A549 (cell line): ENCODE measurements at regions of chr1 and their contacts with region 1.

Region 1: DNA sequence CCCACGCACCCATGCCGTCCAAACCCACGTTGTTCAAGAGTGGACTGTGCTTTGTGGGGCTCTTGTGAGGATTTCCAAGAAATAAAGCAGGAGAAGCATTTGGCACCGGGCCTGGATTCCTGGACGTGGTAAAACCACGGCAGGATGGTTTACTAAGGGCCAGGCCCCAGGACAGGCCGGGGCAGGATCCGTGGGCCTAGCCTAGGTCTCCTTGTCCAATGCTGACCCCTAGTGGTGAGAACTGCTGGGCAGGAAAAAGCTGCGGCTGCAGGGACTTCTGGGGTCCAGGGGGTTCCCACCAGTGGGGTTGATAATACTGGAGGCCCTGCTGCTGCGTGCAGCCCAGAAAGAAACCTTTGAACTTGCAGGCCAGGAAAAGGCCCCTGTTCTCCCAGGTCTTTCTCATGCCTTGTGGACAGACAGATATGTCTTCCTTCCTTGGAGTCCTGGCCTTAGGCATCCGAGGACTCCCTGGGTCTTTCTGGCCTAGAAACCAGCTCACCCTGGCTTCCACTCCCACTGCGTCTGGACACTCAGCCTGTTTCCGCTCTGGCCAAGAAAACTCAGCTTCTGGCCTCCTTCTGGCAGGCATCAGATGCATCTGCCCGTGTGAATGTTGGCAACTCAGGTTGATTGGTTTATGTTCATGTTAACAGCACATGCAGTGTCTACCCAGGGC is 106.9 kb upstream of the TMEM51 start:
- DNase-seq: peak; percentile 60 to 66
- ATAC-seq: peak; percentile 83 to 94
- H3K4me3 ChIP-seq: no peak overlapping the region
- H3K27ac ChIP-seq: peak overlapping the region in 1 of 2 experiments; percentile 72; a peak in 2 of 6 replicates
- H3K4me1 ChIP-seq: no peaks in the 10 kb centered on the region
- CTCF ChIP-seq: peak; percentile 77
- EP300 ChIP-seq: no peak
- POLR2A ChIP-seq: no peak
- RAD21 ChIP-seq: peak; percentile 84 to 86

Region 2: DNA sequence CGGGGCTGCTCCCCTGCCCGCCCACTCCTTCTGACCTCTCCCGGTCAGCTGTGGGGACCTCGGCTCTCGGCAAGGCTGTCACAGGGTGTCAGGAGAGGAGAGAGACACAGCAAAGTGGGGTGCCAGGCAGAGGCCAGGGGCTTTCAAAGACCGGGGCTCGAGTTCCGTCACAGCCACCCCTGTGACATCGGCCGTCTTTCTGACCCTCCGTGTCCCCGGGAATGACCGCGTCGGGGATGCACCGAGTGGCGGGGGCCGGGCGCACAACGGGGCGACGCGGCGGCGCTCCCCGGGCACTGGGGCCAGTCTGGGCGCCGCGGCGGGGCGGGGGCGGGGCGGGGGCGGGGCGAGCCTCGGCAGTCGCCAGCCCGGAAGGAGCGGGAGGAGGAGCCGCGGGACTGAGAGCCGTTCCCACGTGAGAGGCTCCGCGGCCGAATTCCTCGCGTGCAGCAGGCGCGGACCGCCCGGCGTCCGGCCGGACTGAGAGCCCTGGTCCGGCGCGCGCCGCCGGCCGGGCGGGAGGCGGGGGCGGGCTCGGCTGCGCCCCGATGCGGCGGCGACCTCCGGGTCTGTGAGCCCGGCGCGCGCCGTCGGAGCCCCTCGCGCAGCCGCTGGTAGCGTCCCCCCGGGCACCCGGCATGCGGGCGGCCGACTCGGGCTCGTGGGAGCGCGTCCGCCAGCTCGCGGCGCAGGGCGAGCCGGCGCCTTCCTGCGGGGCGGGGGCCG is 122.7 kb before region 1 on chr1:
- CTCF ChIA-PET with region 1: no interaction called
- POLR2A ChIA-PET with region 1: no interaction called
- DNase-seq: peak; percentile 42 to 70
- ATAC-seq: peak; percentile 75 to 76
- H3K4me3 ChIP-seq: peak overlapping the region; percentile 72
- H3K27ac ChIP-seq: peak overlapping the region; percentile 66 to 93
- H3K4me1 ChIP-seq: 0 out of 3 replicates have a peak, but pooled peaks cover 6% of the 10 kb centered on the region
- CTCF ChIP-seq: no peak
- EP300 ChIP-seq: no peak
- POLR2A ChIP-seq: peak; percentile 22; the same call in 1 of the 2 replicates
- RAD21 ChIP-seq: no peak

Region 3: GRCh38 chr1:15028102-15028501 is 18.5 kb before region 1 on chr1:
- CTCF ChIA-PET with region 1: interaction called, 12 read pairs
- POLR2A ChIA-PET with region 1: no interaction called
- DNase-seq: peak in 1 of 2 experiments; percentile 9
- ATAC-seq: no peak; a peak in 1 of 6 replicates
- H3K4me3 ChIP-seq: no peak overlapping the region
- H3K27ac ChIP-seq: no peak overlapping the region
- H3K4me1 ChIP-seq: no peaks in the 10 kb centered on the region
- CTCF ChIP-seq: no peak
- EP300 ChIP-seq: no peak
- POLR2A ChIP-seq: no peak
- RAD21 ChIP-seq: no peak

Region 4: GRCh38 chr1:15033264-15033663 is 13.4 kb before region 1 on chr1:
- CTCF ChIA-PET with region 1: interaction called, 12 read pairs
- POLR2A ChIA-PET with region 1: no interaction called
- DNase-seq: no peak
- ATAC-seq: no peak
- H3K4me3 ChIP-seq: no peak overlapping the region
- H3K27ac ChIP-seq: no peak overlapping the region
- H3K4me1 ChIP-seq: no peaks in the 10 kb centered on the region
- CTCF ChIP-seq: no peak
- EP300 ChIP-seq: no peak
- POLR2A ChIP-seq: no peak
- RAD21 ChIP-seq: no peak